RWPE1 (cell line): ENCODE measurements at regions of chr1 and their contacts with region 1.

Region 1: DNA sequence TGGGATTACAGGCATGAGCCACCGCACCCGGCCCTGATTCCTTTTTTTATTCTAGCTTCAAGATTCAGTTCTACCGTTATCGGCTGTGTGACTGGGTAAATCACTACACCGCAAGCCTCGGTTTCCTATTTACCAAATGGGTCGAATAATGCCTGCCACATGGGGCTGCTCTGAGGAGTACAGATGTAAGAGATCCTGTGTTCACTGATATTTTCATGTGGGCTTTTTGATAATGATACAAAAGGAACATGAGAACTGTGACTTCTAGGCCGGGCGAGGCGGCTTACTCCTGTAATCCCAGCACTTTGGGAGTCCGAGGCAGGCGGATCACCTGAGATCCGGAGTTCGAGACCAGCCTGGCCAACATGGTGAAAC is 695 bp upstream of the PSMB4 start:
- DNase-seq: no peak
- H3K27ac ChIP-seq: peak overlapping the region; percentile 77
- CTCF ChIP-seq: no peak

Region 2: GRCh38 chr1:151198255-151199127 is 200.2 kb before region 1 on chr1 and contains the start of gene PIP5K1A:
- CTCF ChIA-PET with region 1: interaction called, 10 read pairs
- POLR2A ChIA-PET with region 1: no interaction called
- DNase-seq: peak; percentile 99
- H3K27ac ChIP-seq: peak within 1 kb of the TSS; percentile 98
- CTCF ChIP-seq: no peak